Thyroid gland (tissue), 4 donors: ENCODE measurements at regions of chr15 and their contacts with region 1.

Region 1: GRCh38 chr15:63466378-63467192 is 37.8 kb upstream of the USP3 start:
- DNase-seq: peak in 1 of 2 donors; percentile 7
- H3K4me3 ChIP-seq: no peak overlapping the region
- H3K27ac ChIP-seq: no peak overlapping the region
- H3K4me1 ChIP-seq: no peaks in the 10 kb centered on the region
- H3K27me3 ChIP-seq: no peaks in the 10 kb centered on the region
- CTCF ChIP-seq: peak; percentile 23 to 73 (median 50)
- POLR2A ChIP-seq: no peak

Region 2: DNA sequence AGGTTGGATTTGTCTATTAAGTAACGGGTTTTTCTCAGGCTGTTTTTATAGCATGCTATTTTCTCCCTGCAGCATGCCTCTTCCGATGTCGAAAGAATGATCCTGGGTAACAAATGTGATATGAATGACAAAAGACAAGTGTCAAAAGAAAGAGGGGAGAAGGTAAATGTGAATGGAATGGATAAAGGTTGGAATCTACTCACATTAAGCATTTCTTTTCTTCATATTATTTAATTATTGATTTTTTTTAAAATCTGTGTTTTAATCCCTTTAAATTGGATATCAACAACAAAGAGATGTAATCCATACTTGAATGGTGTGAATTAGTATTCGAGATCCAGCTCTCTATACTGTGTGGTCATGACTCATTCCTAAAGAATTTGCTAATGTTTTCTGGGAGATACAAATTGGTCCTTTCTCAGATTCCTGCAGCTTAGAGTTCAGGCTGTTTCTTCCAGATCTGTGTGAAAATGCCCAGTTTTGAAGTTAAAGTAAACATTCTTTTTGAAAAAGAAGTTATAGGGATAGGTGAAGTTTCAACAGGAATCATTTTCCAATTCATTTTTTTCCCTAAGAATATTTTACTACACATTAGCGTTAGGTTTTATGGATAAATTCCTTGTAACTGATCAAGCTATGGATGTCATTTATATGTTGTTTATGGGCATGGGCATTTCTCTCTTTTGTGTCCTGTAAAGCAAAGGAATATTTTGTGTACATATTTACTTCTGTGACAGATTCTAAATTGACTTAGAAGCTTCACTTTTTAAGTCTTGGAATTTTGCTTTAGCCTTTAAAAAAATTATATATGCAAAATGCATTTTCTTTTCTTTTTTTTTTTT is 209.9 kb before region 1 on chr15:
- intact Hi-C with region 1: no loop called
- DNase-seq: no peak
- H3K4me3 ChIP-seq: no peak overlapping the region
- H3K27ac ChIP-seq: no peak overlapping the region
- H3K4me1 ChIP-seq: no peaks in the 10 kb centered on the region
- H3K27me3 ChIP-seq: no peaks in the 10 kb centered on the region
- CTCF ChIP-seq: no peak
- POLR2A ChIP-seq: no peak

Region 3: GRCh38 chr15:64067564-64068030 is 601.0 kb after region 1 on chr15:
- intact Hi-C with region 1: loop called (anchors 10 kb)
- DNase-seq: peak; percentile 66
- H3K4me3 ChIP-seq: no peak overlapping the region
- H3K27ac ChIP-seq: no peak overlapping the region
- H3K4me1 ChIP-seq: peaks cover 0 to 23% of the 10 kb centered on the region in 2 donors
- H3K27me3 ChIP-seq: no peaks in the 10 kb centered on the region
- CTCF ChIP-seq: peak; percentile 56 to 89 (median 81)
- POLR2A ChIP-seq: no peak